Esophagus muscularis mucosa (tissue), 4 donors: ENCODE measurements at regions of chr20 and their contacts with region 1.

Region 1: DNA sequence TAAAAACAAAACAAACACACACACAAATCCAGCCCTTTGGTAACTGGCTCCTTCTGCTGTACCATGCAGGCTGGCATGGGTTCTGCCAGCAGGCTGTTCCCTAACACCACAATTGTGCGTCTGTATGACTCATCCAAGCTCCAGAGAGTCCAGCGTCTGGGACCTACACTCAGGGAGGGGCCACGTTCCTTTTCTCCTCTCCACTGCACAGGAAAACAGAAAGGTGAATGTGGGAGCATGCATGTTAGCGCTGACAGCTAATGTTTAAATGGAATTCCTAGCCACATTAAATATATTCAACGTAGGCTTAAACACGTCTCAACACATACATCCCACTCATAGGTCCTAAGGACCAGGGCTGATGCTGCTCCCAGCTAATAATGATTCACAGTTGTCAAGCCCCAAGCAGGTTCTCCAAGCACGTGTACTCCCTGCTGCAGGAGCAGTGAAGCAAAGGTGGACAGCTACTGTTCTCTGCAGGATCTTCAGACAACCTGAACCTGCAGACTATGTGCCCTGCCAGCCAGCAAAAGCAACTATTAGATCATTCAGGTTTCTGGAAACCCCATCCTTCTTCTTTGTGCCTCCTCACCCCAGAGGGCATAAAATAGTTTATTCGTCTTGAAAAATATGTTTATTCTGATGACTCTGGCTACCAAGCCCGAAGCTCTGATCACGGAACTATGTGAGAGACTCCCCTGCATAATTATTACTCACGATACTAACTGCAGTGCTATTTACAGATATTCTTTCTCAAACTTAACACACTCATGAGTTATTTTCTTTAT is 20.9 kb downstream of the MAP1LC3A start:
- DNase-seq: peak; percentile 90
- H3K4me3 ChIP-seq: no peak overlapping the region
- H3K27ac ChIP-seq: peak overlapping the region in 2 of 4 donors; percentile 10 to 37
- H3K4me1 ChIP-seq: peaks cover 22 to 43% (median 31%) of the 10 kb centered on the region in 4 donors
- H3K27me3 ChIP-seq: no peaks in the 10 kb centered on the region
- CTCF ChIP-seq: peak; percentile 61 to 79 (median 62)
- EP300 ChIP-seq: no peak
- POLR2A ChIP-seq: no peak

Region 2: DNA sequence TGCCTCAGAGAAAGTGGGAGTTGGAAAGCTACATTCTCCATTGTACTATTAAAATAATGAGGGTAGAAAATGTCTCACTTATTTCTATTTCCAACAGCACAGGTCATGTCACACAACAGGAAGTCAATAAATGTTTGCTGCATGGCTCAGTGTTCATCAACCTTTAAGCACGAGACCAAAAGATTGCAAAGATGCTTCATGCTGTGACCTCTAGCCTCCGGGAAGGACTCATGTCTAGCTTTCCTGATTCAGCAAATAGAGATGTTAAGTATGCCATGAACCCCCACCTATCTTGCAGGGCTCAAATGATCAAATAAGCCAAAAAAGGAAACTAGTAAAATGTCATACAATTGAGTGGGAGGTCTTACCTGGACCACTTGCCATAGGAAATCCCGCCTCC is 188.7 kb after region 1 on chr20:
- intact Hi-C with region 1: loop called (anchors 2 kb)
- DNase-seq: no peak
- H3K4me3 ChIP-seq: no peak overlapping the region
- H3K27ac ChIP-seq: no peak overlapping the region
- H3K4me1 ChIP-seq: peaks cover 0 to 14% (median 3%) of the 10 kb centered on the region in 4 donors
- H3K27me3 ChIP-seq: no peaks in the 10 kb centered on the region
- CTCF ChIP-seq: no peak
- EP300 ChIP-seq: no peak
- POLR2A ChIP-seq: no peak